Vagina (tissue), 2 donors: ENCODE measurements at regions of chr6 and their contacts with region 1.

Region 1: GRCh38 chr6:16781348-16782169 is 20.3 kb upstream of the ATXN1 start:
- DNase-seq: no peak
- H3K4me3 ChIP-seq: no peak overlapping the region
- H3K27ac ChIP-seq: no peak overlapping the region
- H3K4me1 ChIP-seq: no peaks in the 10 kb centered on the region
- H3K27me3 ChIP-seq: no peaks in the 10 kb centered on the region
- CTCF ChIP-seq: no peak
- POLR2A ChIP-seq: no peak

Region 2: DNA sequence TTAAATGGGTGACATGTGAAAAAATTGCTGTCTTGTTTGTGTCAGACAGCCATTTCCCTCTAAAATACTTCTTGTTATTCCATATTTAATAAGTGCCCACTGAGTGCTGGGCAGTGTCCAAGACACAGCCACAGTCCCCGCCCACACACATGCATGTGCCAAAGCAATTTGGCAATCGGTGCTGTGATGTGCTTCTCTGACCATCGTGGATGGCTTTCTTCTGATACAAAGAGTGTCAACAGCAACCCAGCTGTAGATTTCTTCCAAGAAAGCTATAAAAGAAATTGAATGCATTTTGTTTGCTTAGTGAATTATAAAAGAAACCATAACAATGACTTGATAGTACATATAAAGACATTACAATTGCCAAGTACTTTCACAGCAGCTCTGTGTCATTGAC is 120.2 kb after region 1 on chr6:
- intact Hi-C with region 1: loop called (anchors 5 kb)
- DNase-seq: no peak
- H3K4me3 ChIP-seq: no peak overlapping the region
- H3K27ac ChIP-seq: no peak overlapping the region
- H3K4me1 ChIP-seq: no peaks in the 10 kb centered on the region
- H3K27me3 ChIP-seq: no peaks in the 10 kb centered on the region
- CTCF ChIP-seq: no peak
- POLR2A ChIP-seq: no peak